ENCODE measurements at regions of chr12 and their contacts with region 1.

Region 1: DNA sequence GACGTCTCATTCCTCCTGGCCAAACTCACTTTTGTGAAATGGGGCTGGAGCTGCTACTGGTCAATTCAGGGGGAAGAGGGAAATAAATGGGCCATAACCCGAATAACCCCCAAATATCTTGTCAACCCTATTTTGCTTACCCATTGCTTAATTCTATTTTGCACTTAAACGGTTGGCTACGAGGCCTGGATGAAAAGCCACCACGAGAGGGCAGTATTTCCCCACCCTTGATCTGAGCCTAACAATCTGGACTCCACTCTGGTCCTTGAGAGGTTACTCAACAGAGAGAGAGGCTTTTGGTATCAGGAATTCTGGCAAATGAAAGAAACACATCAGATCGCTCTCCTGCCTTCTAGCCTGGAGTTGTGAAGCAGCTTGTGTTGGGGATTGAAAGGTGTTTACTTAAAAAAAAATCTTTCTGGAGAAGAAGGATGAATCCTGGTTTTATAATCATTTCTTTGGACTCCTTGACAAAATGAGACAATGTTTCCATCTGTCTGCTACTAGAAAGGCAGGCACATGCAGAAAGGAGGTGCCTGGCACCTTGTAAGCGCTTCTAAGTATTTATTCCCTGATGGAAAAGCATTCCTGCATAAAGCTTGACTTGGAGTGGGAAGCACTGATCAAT is 22.4 kb upstream of the FBXO21 start:
- DNase-seq: peak; percentile 24 to 75 (median 61)
- ATAC-seq: peak; percentile 51
- H3K4me3 ChIP-seq: no peak overlapping the region
- H3K4me3 Mint-ChIP-seq: no peak overlapping the region
- H3K27ac ChIP-seq: no peak overlapping the region
- H3K27ac Mint-ChIP-seq: no peak overlapping the region
- H3K4me1 ChIP-seq: no peaks in the 10 kb centered on the region
- H3K4me1 Mint-ChIP-seq: no peaks in the 10 kb centered on the region
- H3K27me3 ChIP-seq: peaks cover 0 to 6% of the 10 kb centered on the region in 2 experiments
- H3K27me3 Mint-ChIP-seq: peaks cover 18% of the 10 kb centered on the region
- CTCF ChIP-seq: peak; percentile 78

Region 2: DNA sequence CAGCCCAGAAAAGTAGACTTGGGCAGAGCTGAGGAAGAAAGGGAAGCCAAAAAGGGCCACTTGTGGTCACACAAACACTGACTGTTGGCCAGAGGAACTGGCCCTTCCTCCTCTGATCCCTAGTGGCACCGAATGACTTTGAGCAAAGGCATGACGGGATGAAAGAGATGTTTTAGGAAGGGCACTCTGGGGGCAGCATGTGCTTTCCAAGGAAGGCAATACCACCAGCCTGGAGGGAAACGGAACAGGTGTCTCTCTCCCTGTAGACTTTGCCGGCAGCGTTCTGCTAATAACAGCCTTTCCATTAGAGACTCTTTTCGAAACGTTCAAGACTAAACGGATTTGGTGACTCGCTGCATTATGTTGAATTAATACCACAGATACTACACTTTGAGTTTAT is 10.1 kb before region 1 on chr12:
- CTCF ChIA-PET with region 1: interaction called, 39 read pairs
- POLR2A ChIA-PET with region 1: no interaction called
- intact Hi-C with region 1: no loop called
- DNase-seq: no peak
- ATAC-seq: no peak
- H3K4me3 ChIP-seq: no peak overlapping the region
- H3K4me3 Mint-ChIP-seq: no peak overlapping the region
- H3K27ac ChIP-seq: no peak overlapping the region
- H3K27ac Mint-ChIP-seq: no peak overlapping the region
- H3K4me1 ChIP-seq: no peaks in the 10 kb centered on the region
- H3K4me1 Mint-ChIP-seq: no peaks in the 10 kb centered on the region
- H3K27me3 ChIP-seq: peaks cover 0 to 3% of the 10 kb centered on the region in 2 experiments
- H3K27me3 Mint-ChIP-seq: peaks cover 15% of the 10 kb centered on the region
- CTCF ChIP-seq: no peak

Region 3: GRCh38 chr12:117228239-117228638 is 15.6 kb after region 1 on chr12:
- CTCF ChIA-PET with region 1: interaction called, 10 read pairs
- POLR2A ChIA-PET with region 1: no interaction called
- intact Hi-C with region 1: no loop called
- DNase-seq: no peak
- ATAC-seq: no peak
- H3K4me3 ChIP-seq: no peak overlapping the region
- H3K4me3 Mint-ChIP-seq: no peak overlapping the region
- H3K27ac ChIP-seq: no peak overlapping the region
- H3K27ac Mint-ChIP-seq: no peak overlapping the region
- H3K4me1 ChIP-seq: no peaks in the 10 kb centered on the region
- H3K4me1 Mint-ChIP-seq: no peaks in the 10 kb centered on the region
- H3K27me3 ChIP-seq: no peaks in the 10 kb centered on the region
- H3K27me3 Mint-ChIP-seq: peaks cover 18% of the 10 kb centered on the region
- CTCF ChIP-seq: no peak

Region 4: GRCh38 chr12:117587631-117588287 is 375.1 kb after region 1 on chr12:
- CTCF ChIA-PET with region 1: interaction called, 3 read pairs
- POLR2A ChIA-PET with region 1: no interaction called
- intact Hi-C with region 1: loop called in 1 of 2 experiments (anchors 5 kb)
- DNase-seq: peak in 7 of 9 experiments; percentile 3 to 51 (median 16)
- ATAC-seq: no peak
- H3K4me3 ChIP-seq: no peak overlapping the region
- H3K4me3 Mint-ChIP-seq: no peak overlapping the region
- H3K27ac ChIP-seq: no peak overlapping the region
- H3K27ac Mint-ChIP-seq: no peak overlapping the region
- H3K4me1 ChIP-seq: no peaks in the 10 kb centered on the region
- H3K4me1 Mint-ChIP-seq: peaks cover 2% of the 10 kb centered on the region
- H3K27me3 ChIP-seq: no peaks in the 10 kb centered on the region
- H3K27me3 Mint-ChIP-seq: peaks cover 14% of the 10 kb centered on the region
- CTCF ChIP-seq: peak; percentile 48

Region 5: DNA sequence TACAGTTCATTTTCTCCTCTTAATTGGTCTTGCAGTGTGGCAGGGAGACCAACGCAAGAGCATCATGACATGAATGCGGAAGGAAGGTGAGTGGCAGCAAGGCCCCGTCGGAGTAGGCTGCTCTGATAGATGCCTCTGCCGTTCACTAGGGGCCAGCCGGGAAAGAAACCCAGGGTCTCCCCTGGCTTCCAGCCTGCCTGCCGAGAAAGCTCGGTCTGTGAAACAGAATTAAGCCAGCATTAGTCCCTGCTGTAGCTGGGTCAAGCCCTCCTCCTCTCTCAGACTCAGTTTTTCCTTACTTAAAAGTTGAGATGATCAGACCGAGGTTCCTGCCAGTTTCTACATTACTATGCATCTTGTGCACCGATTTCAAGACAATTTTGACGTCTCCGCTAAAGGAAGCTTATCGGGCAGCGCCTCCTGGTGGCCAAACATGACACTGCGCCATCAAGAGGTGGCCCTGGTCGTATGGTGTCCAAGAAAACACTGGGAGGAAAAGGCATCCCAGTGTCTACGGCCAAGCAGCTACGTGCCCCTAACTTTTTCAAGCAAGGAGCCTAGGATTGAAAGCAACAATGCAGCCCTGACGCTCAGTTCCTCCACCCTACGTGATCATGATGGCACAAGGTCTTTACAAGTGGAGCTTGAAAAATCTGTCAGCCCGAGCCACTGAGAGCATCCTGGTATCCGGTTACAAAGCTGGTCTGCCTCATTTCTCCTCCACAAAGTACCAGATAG is 624.5 kb after region 1 on chr12:
- CTCF ChIA-PET with region 1: interaction called, 30 read pairs
- POLR2A ChIA-PET with region 1: no interaction called
- intact Hi-C with region 1: loop called in 1 of 2 experiments (anchors 1 kb)
- DNase-seq: peak; percentile 48 to 78 (median 66)
- ATAC-seq: peak; percentile 57
- H3K4me3 ChIP-seq: no peak overlapping the region
- H3K4me3 Mint-ChIP-seq: peak overlapping the region; percentile 33
- H3K27ac ChIP-seq: no peak overlapping the region
- H3K27ac Mint-ChIP-seq: no peak overlapping the region
- H3K4me1 ChIP-seq: no peaks in the 10 kb centered on the region
- H3K4me1 Mint-ChIP-seq: peaks cover 9% of the 10 kb centered on the region
- H3K27me3 ChIP-seq: no peaks in the 10 kb centered on the region
- H3K27me3 Mint-ChIP-seq: peaks cover 13% of the 10 kb centered on the region
- CTCF ChIP-seq: peak; percentile 87

Region 6: GRCh38 chr12:117850048-117850447 is 637.4 kb after region 1 on chr12:
- CTCF ChIA-PET with region 1: interaction called, 3 read pairs
- POLR2A ChIA-PET with region 1: no interaction called
- intact Hi-C with region 1: loop called in 1 of 2 experiments (anchors 5 kb)
- DNase-seq: peak in 2 of 9 experiments; percentile 17 to 25
- ATAC-seq: peak; percentile 40
- H3K4me3 ChIP-seq: no peak overlapping the region
- H3K4me3 Mint-ChIP-seq: no peak overlapping the region
- H3K27ac ChIP-seq: no peak overlapping the region
- H3K27ac Mint-ChIP-seq: no peak overlapping the region
- H3K4me1 ChIP-seq: no peaks in the 10 kb centered on the region
- H3K4me1 Mint-ChIP-seq: no peaks in the 10 kb centered on the region
- H3K27me3 ChIP-seq: peaks cover 3% of the 10 kb centered on the region in 2 experiments
- H3K27me3 Mint-ChIP-seq: peaks cover 29% of the 10 kb centered on the region
- CTCF ChIP-seq: peak; percentile 67

Measured in CD8-positive, alpha-beta T cell (primary cell).